ENCODE measurements at regions of chr20 and their contacts with region 1.

Region 1: DNA sequence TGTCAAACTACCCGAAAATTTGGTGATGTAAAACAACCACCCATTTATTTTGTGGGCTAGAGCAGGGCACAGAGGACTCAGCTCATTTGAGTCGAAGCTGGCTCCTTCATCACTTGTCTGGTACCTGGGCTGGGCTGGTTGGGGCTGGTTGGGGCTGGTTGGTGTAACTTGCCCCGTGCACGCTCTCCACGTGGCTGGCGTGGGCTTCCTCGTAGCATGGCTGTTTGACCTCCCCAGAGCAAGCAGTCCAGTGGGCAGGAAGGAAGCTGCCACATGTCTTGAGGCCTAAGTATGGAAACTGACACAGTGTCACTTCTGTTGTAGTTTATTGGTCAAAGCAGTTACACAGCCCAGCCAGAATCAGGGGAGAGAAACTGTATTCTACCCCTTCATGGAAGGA is 27.1 kb downstream of the BCAS4 start:
- DNase-seq: peak; percentile 67
- ATAC-seq: peak; percentile 17
- H3K4me3 Mint-ChIP-seq: no peak overlapping the region
- H3K27ac Mint-ChIP-seq: peak overlapping the region; percentile 82
- H3K4me1 Mint-ChIP-seq: peaks cover 63% of the 10 kb centered on the region
- H3K27me3 Mint-ChIP-seq: no peaks in the 10 kb centered on the region

Region 2: GRCh38 chr20:50837532-50838506 is 15.8 kb after region 1 on chr20:
- CTCF ChIA-PET with region 1: interaction called, 11 read pairs
- DNase-seq: peak; percentile 86
- ATAC-seq: peak; percentile 88
- H3K4me3 Mint-ChIP-seq: peak overlapping the region; percentile 20
- H3K27ac Mint-ChIP-seq: peak overlapping the region; percentile 89
- H3K4me1 Mint-ChIP-seq: peaks cover 57% of the 10 kb centered on the region
- H3K27me3 Mint-ChIP-seq: no peaks in the 10 kb centered on the region